WTC11 (cell line): ENCODE measurements at regions of chr4 and their contacts with region 1.

Region 1: GRCh38 chr4:8241895-8242696 is 27.5 kb upstream of the HTRA3 start:
- DNase-seq: peak; percentile 95
- ATAC-seq: peak; percentile 89
- H3K4me3 Mint-ChIP-seq: no peak overlapping the region
- H3K27ac Mint-ChIP-seq: no peak overlapping the region
- H3K4me1 Mint-ChIP-seq: no peaks in the 10 kb centered on the region
- H3K27me3 Mint-ChIP-seq: no peaks in the 10 kb centered on the region; the same call in 1 of the 2 replicates
- CTCF ChIP-seq: peak; percentile 96

Region 2: DNA sequence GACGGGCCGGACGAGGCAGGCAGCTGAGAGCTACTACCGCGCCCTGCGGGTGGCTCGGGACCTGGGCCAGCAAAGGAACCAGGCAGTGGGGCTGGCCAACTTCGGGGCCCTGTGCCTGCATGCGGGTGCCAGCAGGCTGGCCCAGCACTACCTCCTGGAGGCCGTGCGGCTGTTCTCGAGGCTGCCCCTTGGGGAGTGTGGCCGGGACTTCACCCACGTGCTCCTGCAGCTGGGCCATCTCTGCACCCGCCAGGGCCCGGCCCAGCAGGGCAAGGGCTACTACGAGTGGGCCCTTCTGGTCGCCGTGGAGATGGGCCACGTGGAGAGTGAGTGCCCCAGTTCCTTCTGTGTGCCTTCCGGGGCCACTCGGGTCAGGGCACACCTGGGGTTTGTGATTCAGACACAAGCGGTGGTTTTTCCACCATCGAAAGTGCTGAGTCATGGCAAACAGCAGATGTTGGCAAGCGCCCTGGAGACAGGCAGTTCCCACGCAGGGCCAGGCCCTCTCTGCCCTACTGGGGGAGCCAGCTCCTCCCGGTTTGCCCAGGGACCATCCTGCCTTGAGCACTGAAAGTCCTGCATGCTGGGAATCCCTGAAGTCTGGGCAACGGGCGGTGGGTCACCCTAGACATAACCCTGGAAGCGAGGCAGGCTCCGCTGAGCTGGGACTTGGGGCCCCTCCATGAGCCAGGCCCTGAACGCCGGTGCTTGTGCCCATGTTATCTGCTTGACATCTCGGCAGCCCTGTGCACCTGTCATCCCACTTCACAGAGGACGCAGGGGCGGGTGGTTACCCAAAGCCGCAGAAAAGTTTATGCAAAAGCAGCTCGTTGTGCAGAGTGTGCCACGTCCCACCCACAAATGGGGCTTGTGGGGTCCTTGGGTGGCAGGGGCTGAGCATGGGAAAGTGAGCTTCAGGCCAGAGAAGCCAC is 13.5 kb before region 1 on chr4:
- CTCF ChIA-PET with region 1: interaction called, 12 read pairs
- POLR2A ChIA-PET with region 1: no interaction called
- DNase-seq: no peak
- ATAC-seq: no peak
- H3K4me3 Mint-ChIP-seq: no peak overlapping the region
- H3K27ac Mint-ChIP-seq: no peak overlapping the region
- H3K4me1 Mint-ChIP-seq: peaks cover 18% of the 10 kb centered on the region
- H3K27me3 Mint-ChIP-seq: no peaks in the 10 kb centered on the region
- CTCF ChIP-seq: no peak

Region 3: GRCh38 chr4:8340781-8341241 is 98.7 kb after region 1 on chr4:
- CTCF ChIA-PET with region 1: interaction called, 11 read pairs
- POLR2A ChIA-PET with region 1: no interaction called
- DNase-seq: no peak
- ATAC-seq: no peak
- H3K4me3 Mint-ChIP-seq: no peak overlapping the region
- H3K27ac Mint-ChIP-seq: no peak overlapping the region
- H3K4me1 Mint-ChIP-seq: peaks cover 7% of the 10 kb centered on the region
- H3K27me3 Mint-ChIP-seq: peaks cover 5% of the 10 kb centered on the region; the same call in 1 of the 2 replicates
- CTCF ChIP-seq: no peak

Region 4: GRCh38 chr4:8403173-8403753 is 161.2 kb after region 1 on chr4:
- CTCF ChIA-PET with region 1: interaction called, 28 read pairs
- POLR2A ChIA-PET with region 1: no interaction called
- DNase-seq: peak; percentile 88
- ATAC-seq: peak; percentile 93
- H3K4me3 Mint-ChIP-seq: no peak overlapping the region
- H3K27ac Mint-ChIP-seq: peak overlapping the region; percentile 86
- H3K4me1 Mint-ChIP-seq: peaks cover 4% of the 10 kb centered on the region; the same call in 1 of the 2 replicates
- H3K27me3 Mint-ChIP-seq: peaks cover 2% of the 10 kb centered on the region; the same call in 1 of the 2 replicates
- CTCF ChIP-seq: peak; percentile 68; the same call in 1 of the 2 replicates

Region 5: GRCh38 chr4:8410641-8411271 is 168.7 kb after region 1 on chr4:
- CTCF ChIA-PET with region 1: interaction called, 21 read pairs
- POLR2A ChIA-PET with region 1: no interaction called
- DNase-seq: peak; percentile 85
- ATAC-seq: peak; percentile 92
- H3K4me3 Mint-ChIP-seq: no peak overlapping the region
- H3K27ac Mint-ChIP-seq: peak overlapping the region; percentile 95
- H3K4me1 Mint-ChIP-seq: peaks cover 9% of the 10 kb centered on the region
- H3K27me3 Mint-ChIP-seq: peaks cover 2% of the 10 kb centered on the region; the same call in 1 of the 2 replicates
- CTCF ChIP-seq: no peak

Region 6: DNA sequence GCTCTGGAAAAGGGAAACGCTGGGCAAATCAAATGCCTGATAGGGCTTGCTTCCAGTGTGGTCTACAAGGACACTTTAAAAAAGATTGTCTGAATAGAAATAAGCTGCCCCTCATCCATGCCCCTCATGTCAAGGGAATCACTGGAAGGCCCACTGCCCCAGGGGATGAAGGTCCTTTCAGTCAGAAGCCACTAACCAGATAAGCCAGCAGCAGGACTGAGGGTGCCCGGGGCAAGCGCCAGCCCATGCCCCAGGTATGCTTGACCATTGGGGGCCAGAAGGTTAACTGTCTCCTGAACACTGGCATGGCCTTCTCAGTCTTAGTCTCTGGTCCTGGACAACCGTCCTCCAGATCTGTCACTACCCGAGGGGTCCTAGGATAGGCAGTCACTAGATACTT is 180.7 kb after region 1 on chr4:
- CTCF ChIA-PET with region 1: no interaction called
- POLR2A ChIA-PET with region 1: no interaction called
- DNase-seq: no peak
- ATAC-seq: no peak
- H3K4me3 Mint-ChIP-seq: no peak overlapping the region
- H3K27ac Mint-ChIP-seq: no peak overlapping the region
- H3K4me1 Mint-ChIP-seq: peaks cover 4% of the 10 kb centered on the region
- H3K27me3 Mint-ChIP-seq: peaks cover 3% of the 10 kb centered on the region; the same call in 1 of the 2 replicates
- CTCF ChIP-seq: no peak